Activated B cell treated with CpG ODN at 0.5 μM for 24 hours (primary cell): ENCODE measurements at regions of chr2 and their contacts with region 1.

Region 1: DNA sequence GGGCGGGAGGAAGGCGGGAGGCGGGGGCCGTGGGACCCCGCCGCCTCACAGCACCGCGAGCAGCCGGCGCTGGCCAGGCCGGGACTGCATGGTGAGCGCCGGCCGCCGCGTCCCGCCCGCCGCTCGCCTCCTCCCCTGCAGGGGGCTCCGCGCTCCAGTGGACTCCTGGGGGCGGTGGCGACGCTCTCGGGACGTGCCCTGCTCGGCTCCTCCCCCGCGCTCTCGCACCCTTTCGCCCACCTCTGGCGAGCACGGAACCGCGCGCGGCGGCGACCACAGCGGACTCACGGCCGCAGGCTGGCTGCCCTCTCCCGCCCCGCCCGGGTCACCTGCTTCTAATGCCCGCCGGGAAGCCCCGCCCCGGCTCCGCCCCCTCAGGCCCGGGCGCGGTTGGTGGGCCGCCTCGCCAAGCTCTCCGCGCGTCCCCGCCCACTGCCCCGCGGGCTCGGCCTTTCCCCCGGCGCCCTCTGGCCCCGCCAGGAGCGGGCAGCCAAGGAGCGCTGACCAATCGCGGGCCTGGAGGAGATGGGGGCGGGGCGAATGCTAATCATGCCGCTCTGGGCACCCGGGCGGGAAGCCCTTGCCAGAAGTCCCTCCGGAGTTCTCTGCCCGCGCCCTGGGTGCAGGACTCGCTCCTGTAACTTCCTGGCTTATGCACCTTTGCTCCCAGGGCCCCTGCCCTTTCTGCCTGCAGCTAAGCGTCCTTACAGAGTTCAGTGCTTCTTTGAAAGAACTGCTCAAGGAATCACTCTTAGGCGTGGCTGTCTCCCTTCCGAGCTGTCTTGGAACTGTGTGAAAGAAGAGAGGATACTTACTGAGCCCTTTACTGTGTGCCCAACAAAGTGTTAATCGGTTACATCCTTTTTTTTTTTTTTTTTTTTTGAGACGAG is at the start of gene FZD5:
- DNase-seq: peak; percentile 93
- ATAC-seq: peak; percentile 91
- H3K4me3 Mint-ChIP-seq: peak within 1 kb of the TSS; percentile 87
- H3K27ac Mint-ChIP-seq: no peak within 1 kb of the TSS
- H3K4me1 Mint-ChIP-seq: peaks cover 36% of the 10 kb centered on the region
- H3K27me3 Mint-ChIP-seq: peaks cover 7% of the 10 kb centered on the region
- CTCF ChIP-seq: no peak
- total RNA-seq, gene FZD5: 0.66 and 0.89 TPM in 2 replicates

Region 2: DNA sequence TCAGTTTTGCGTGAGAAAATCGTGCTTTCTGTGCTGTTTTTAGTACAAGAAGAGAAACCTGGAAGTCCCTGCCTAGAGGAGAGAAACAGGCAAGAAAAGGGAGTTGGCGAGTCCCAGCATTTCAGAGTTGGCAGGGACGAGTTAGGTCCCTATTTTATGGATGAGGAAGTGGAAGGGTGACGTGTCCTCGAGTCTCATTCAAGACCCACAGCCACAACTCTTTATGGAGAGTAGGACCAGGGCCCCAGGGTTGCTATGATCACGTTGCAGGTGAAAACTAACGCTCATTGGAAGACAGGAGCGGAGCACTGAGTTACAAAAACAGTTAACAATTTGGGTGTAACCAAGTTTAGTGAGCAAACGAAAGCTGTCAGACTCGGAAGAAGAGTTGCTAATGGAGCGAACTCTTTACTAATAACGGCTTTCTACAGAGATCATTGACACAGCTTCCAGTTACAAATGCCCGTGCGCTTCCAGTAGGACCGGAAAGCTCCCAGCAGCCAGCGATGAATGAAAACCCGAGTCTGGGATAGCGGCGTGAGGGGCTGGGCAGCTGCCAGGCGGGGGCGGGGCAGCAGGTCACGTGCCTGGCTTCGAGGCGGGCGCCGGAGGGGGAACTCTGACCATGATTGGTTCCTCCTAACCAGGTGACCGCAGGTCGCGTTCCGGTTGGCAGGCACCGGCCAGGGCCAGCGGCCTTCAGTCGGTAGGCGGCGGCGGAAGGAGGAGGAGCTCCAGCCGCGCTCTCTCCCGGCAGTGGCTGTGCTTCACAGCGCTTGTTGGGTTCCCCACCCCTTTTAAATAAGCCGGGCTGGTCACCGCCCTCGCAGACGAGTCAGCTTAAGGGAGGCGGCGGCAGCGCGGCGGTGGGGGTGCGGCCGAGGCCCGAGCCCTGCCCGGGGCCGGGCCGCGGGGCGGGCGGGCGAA is 58.8 kb before region 1 on chr2 and contains the start of gene CCNYL1:
- CTCF ChIA-PET with region 1: interaction called, 6 read pairs
- POLR2A ChIA-PET with region 1: interaction called, 4 read pairs
- intact Hi-C with region 1: loop called (anchors 1 kb)
- DNase-seq: peak; percentile 92
- ATAC-seq: peak; percentile 95
- H3K4me3 Mint-ChIP-seq: peak within 1 kb of the TSS; percentile 95
- H3K27ac Mint-ChIP-seq: peak within 1 kb of the TSS; percentile 85
- H3K4me1 Mint-ChIP-seq: peaks cover 23% of the 10 kb centered on the region
- H3K27me3 Mint-ChIP-seq: no peaks in the 10 kb centered on the region
- CTCF ChIP-seq: no peak
- total RNA-seq, gene CCNYL1: 12.2 and 13.5 TPM in 2 replicates

Region 3: DNA sequence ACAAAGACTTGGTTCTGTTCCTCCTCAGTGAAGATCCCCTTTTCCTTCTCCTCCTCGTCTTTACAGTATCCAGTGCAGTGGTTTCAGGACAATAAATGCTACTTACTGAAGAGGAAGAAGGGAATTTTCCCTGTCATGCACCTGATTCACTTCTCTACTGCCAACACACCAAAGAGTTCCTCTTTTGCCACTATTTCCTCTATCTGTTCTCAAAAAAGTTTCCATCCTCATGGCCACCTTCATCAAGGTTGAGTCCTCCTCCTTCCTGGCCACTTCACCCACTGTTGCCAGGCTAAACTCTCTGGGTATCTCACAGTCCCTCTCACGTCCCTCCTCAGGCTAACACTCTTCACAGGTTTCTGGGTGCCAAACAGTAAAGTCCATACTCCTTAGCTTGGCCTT is 213.8 kb after region 1 on chr2:
- CTCF ChIA-PET with region 1: no interaction called
- POLR2A ChIA-PET with region 1: no interaction called
- intact Hi-C with region 1: loop called (anchors 1 kb)
- DNase-seq: peak; percentile 23
- ATAC-seq: peak; percentile 88
- H3K4me3 Mint-ChIP-seq: peak overlapping the region; percentile 70
- H3K27ac Mint-ChIP-seq: peak overlapping the region; percentile 94
- H3K4me1 Mint-ChIP-seq: peaks cover 37% of the 10 kb centered on the region
- H3K27me3 Mint-ChIP-seq: no peaks in the 10 kb centered on the region
- CTCF ChIP-seq: no peak

Region 4: GRCh38 chr2:208040199-208041171 is 270.6 kb after region 1 on chr2:
- CTCF ChIA-PET with region 1: interaction called, 10 read pairs
- POLR2A ChIA-PET with region 1: interaction called, 4 read pairs
- intact Hi-C with region 1: loop called (anchors 2 kb)
- DNase-seq: peak; percentile 41
- ATAC-seq: peak; percentile 91
- H3K4me3 Mint-ChIP-seq: no peak overlapping the region
- H3K27ac Mint-ChIP-seq: no peak overlapping the region
- H3K4me1 Mint-ChIP-seq: no peaks in the 10 kb centered on the region
- H3K27me3 Mint-ChIP-seq: peaks cover 2% of the 10 kb centered on the region
- CTCF ChIP-seq: peak; percentile 47